ENCODE measurements at regions of chr2 and their contacts with region 1.

Region 1: DNA sequence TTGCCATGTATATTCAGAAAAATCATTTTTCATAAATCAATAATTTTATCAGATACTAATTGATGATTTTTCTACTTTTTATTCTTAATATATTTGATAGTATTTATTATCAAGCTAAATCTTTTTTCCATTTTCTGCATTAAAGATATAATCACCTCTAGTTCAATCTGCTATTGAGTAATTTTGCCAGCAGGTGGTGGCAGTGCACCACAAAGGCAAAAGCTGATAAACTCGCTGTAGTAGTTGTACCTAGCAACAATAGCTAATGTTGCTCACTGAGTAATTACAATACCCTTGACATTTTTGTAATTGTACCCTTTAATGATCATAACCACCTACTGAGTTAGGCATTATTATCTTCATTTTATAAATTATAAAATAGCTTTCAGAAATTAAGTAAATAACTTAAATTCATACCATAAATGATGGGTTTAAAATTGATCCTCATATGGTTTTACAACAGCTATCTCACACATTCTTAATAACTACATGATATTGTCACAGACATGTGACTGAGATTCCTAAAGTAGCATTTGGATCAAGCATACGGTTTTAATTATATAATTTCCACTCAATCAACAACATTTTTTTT is 52.0 kb upstream of the CALCRL start:
- DNase-seq: peak; percentile 73
- ATAC-seq: peak; percentile 44
- H3K4me3 Mint-ChIP-seq: no peak overlapping the region
- H3K27ac Mint-ChIP-seq: no peak overlapping the region
- H3K4me1 Mint-ChIP-seq: peaks cover 6% of the 10 kb centered on the region
- H3K27me3 Mint-ChIP-seq: peaks cover 2% of the 10 kb centered on the region

Region 2: GRCh38 chr2:187532348-187533120 is 32.5 kb after region 1 on chr2:
- CTCF ChIA-PET with region 1: no interaction called
- POLR2A ChIA-PET with region 1: no interaction called
- intact Hi-C with region 1: no loop called
- DNase-seq: no peak
- ATAC-seq: no peak
- H3K4me3 Mint-ChIP-seq: no peak overlapping the region
- H3K27ac Mint-ChIP-seq: no peak overlapping the region
- H3K4me1 Mint-ChIP-seq: no peaks in the 10 kb centered on the region
- H3K27me3 Mint-ChIP-seq: no peaks in the 10 kb centered on the region

Region 3: GRCh38 chr2:187574969-187575750 is 75.1 kb after region 1 on chr2:
- CTCF ChIA-PET with region 1: interaction called, 55 read pairs
- POLR2A ChIA-PET with region 1: no interaction called
- intact Hi-C with region 1: loop called in 1 of 2 experiments (anchors 1 kb)
- DNase-seq: no peak
- ATAC-seq: no peak
- H3K4me3 Mint-ChIP-seq: no peak overlapping the region
- H3K27ac Mint-ChIP-seq: no peak overlapping the region
- H3K4me1 Mint-ChIP-seq: no peaks in the 10 kb centered on the region
- H3K27me3 Mint-ChIP-seq: no peaks in the 10 kb centered on the region

Region 4: GRCh38 chr2:187842978-187843847 is 343.2 kb after region 1 on chr2:
- CTCF ChIA-PET with region 1: interaction called, 34 read pairs
- POLR2A ChIA-PET with region 1: no interaction called
- intact Hi-C with region 1: loop called (anchors 1 to 2 kb)
- DNase-seq: no peak
- ATAC-seq: no peak
- H3K4me3 Mint-ChIP-seq: no peak overlapping the region
- H3K27ac Mint-ChIP-seq: no peak overlapping the region
- H3K4me1 Mint-ChIP-seq: no peaks in the 10 kb centered on the region
- H3K27me3 Mint-ChIP-seq: no peaks in the 10 kb centered on the region

Region 5: GRCh38 chr2:188369365-188369764 is 869.3 kb after region 1 on chr2:
- CTCF ChIA-PET with region 1: interaction called, 3 read pairs
- POLR2A ChIA-PET with region 1: no interaction called
- intact Hi-C with region 1: loop called (anchors 1 to 10 kb)
- DNase-seq: peak; percentile 20
- ATAC-seq: no peak
- H3K4me3 Mint-ChIP-seq: no peak overlapping the region
- H3K27ac Mint-ChIP-seq: no peak overlapping the region
- H3K4me1 Mint-ChIP-seq: no peaks in the 10 kb centered on the region
- H3K27me3 Mint-ChIP-seq: no peaks in the 10 kb centered on the region

Region 6: DNA sequence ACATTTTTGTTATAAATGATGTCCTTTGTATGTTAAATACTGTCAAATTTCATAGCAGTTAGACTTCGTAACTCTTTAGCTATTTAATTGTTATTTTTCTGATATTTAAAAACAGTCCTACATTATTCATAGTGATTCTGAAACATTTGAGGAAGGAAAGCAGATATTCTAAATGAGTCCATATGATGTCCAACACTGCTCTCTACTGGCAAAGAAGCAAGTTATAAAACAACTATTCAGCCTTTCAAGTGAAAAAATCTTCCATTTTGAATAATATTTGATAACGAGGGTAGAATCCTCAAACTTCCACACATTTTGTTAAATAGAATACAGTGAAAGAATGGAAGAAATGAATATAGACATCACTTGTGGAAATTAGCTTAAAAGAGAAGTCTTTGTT is 1012.4 kb after region 1 on chr2:
- CTCF ChIA-PET with region 1: interaction called, 3 read pairs
- POLR2A ChIA-PET with region 1: no interaction called
- intact Hi-C with region 1: loop called (anchors 1 to 5 kb)
- DNase-seq: no peak
- ATAC-seq: peak; percentile 30
- H3K4me3 Mint-ChIP-seq: no peak overlapping the region
- H3K27ac Mint-ChIP-seq: no peak overlapping the region
- H3K4me1 Mint-ChIP-seq: no peaks in the 10 kb centered on the region
- H3K27me3 Mint-ChIP-seq: no peaks in the 10 kb centered on the region

Region 7: DNA sequence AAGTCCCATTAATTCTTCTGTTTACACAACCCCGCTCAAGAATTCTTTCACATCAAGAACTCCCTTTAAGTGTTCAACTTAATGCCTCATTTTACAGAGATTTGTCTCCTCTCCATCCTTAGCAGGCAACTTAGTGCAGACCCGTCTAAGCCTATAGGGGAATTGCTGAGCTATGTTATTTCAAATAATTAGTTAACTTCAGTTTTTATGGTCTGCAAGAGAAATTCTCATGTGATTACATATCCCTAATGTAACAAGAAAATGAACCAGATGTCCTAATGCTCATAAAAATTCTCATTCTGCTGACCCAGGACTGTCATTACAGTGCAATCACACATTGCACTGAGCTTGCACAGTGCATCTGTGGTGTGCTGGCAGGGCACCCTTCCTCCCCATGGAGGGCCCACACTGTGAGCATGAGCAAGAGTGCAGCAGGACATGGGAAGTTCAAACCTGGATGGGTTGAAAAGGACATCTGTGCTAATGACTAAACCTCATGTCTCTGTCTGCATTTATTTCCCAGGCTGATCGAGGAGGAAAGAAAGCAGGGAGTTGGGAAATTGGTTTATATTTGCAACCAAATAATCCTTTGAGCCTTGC is 1582.4 kb after region 1 on chr2:
- CTCF ChIA-PET with region 1: no interaction called
- POLR2A ChIA-PET with region 1: no interaction called
- intact Hi-C with region 1: no loop called
- DNase-seq: no peak
- ATAC-seq: no peak
- H3K4me3 Mint-ChIP-seq: no peak overlapping the region
- H3K27ac Mint-ChIP-seq: no peak overlapping the region
- H3K4me1 Mint-ChIP-seq: no peaks in the 10 kb centered on the region
- H3K27me3 Mint-ChIP-seq: no peaks in the 10 kb centered on the region